MCF 10A (cell line): ENCODE measurements at regions of chr1 and their contacts with region 1.

Region 1: DNA sequence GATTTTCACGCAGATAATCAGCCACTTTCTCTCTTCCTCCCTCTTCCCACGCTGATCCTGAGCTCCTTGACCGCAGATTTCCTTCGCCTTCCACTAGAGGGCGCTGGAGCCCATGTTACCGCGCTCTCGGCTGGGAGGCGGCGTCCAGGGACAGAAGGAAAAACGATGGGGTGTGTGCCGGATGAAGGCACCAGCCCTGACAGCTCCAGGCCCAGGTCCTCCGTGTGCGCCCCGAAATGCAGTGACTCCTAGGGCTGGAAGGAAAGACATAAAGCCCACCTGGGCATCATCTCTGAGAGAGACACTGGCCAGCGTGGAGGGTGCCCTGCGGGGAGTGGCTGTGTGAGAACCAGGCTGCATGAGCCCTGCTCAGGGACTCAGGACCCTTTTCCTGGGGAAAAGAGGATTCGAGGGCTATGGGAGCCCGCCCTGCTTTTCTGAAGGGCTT is 44.9 kb upstream of the CYP2J2 start:
- DNase-seq: peak; percentile 71
- H3K4me3 Mint-ChIP-seq: no peak overlapping the region
- H3K27ac Mint-ChIP-seq: no peak overlapping the region
- H3K4me1 Mint-ChIP-seq: no peaks in the 10 kb centered on the region
- H3K27me3 Mint-ChIP-seq: peaks cover 55% of the 10 kb centered on the region
- CTCF ChIP-seq: peak; percentile 91

Region 2: GRCh38 chr1:59986516-59987310 is 15.2 kb after region 1 on chr1:
- CTCF ChIA-PET with region 1: interaction called, 38 read pairs
- POLR2A ChIA-PET with region 1: no interaction called
- intact Hi-C with region 1: no loop called
- DNase-seq: no peak
- H3K4me3 Mint-ChIP-seq: no peak overlapping the region
- H3K27ac Mint-ChIP-seq: no peak overlapping the region
- H3K4me1 Mint-ChIP-seq: no peaks in the 10 kb centered on the region
- H3K27me3 Mint-ChIP-seq: peaks cover 56% of the 10 kb centered on the region
- CTCF ChIP-seq: no peak

Region 3: DNA sequence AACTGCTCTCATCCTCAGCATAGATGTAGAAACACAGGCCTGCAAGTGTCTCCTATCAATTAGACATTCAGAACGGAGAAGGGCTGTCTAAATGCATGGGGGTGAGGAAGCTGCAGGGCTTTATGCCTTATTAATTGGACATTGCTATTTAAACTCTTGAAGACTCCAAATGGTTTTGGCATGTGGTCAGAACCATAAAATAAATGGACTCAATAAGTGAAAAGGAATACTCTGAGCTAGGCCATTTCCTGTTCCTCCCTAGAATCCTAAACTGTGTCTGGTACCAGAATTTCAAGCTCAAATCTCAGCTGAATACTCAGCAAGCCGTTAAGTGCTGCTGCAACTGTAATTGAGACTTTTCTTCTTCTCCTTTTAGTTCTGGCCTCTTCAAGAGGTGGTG is 182.5 kb after region 1 on chr1:
- CTCF ChIA-PET with region 1: interaction called, 11 read pairs
- POLR2A ChIA-PET with region 1: no interaction called
- intact Hi-C with region 1: no loop called
- DNase-seq: no peak
- H3K4me3 Mint-ChIP-seq: no peak overlapping the region
- H3K27ac Mint-ChIP-seq: no peak overlapping the region
- H3K4me1 Mint-ChIP-seq: no peaks in the 10 kb centered on the region
- H3K27me3 Mint-ChIP-seq: peaks cover 22% of the 10 kb centered on the region
- CTCF ChIP-seq: no peak

Region 4: GRCh38 chr1:60765204-60765603 is 793.7 kb after region 1 on chr1:
- CTCF ChIA-PET with region 1: interaction called, 13 read pairs
- POLR2A ChIA-PET with region 1: no interaction called
- intact Hi-C with region 1: loop called (anchors 5 kb)
- DNase-seq: peak; percentile 57
- H3K4me3 Mint-ChIP-seq: no peak overlapping the region
- H3K27ac Mint-ChIP-seq: no peak overlapping the region
- H3K4me1 Mint-ChIP-seq: peaks cover 4% of the 10 kb centered on the region
- H3K27me3 Mint-ChIP-seq: peaks cover 23% of the 10 kb centered on the region
- CTCF ChIP-seq: peak; percentile 71